PC-9 (cell line): ENCODE measurements at regions of chr16 and their contacts with region 1.

Region 1: GRCh38 chr16:53266156-53266555 is 168.1 kb upstream of the RBL2 start:
- DNase-seq: no peak
- H3K4me3 ChIP-seq: no peak overlapping the region
- H3K27ac ChIP-seq: no peak overlapping the region
- H3K4me1 ChIP-seq: no peaks in the 10 kb centered on the region
- H3K27me3 ChIP-seq: no peaks in the 10 kb centered on the region
- CTCF ChIP-seq: no peak

Region 2: GRCh38 chr16:52634104-52634503 is 632.1 kb before region 1 on chr16:
- CTCF ChIA-PET with region 1: no interaction called
- POLR2A ChIA-PET with region 1: no interaction called
- intact Hi-C with region 1: no loop called
- DNase-seq: no peak
- H3K4me3 ChIP-seq: no peak overlapping the region
- H3K27ac ChIP-seq: no peak overlapping the region
- H3K4me1 ChIP-seq: no peaks in the 10 kb centered on the region
- H3K27me3 ChIP-seq: no peaks in the 10 kb centered on the region
- CTCF ChIP-seq: no peak

Region 3: DNA sequence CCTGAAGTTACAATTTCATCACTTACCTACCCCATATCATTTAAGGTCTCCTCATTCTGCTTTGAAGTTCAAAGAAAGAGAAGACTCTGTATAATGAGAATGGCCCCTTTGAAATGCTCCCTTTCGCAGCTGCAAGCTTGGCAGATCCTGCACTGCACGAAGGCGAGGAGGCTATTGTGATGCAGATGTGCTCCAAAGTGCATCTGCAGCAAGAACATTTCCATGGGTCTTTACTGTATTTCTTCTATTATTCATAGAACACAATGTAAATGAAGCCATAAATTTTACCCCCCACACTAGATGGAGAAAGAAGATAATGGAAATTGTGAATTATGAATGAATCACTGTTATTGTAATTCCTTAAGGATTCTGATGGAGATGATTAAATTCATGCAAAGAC is 392.1 kb before region 1 on chr16:
- CTCF ChIA-PET with region 1: interaction called, 17 read pairs
- POLR2A ChIA-PET with region 1: no interaction called
- intact Hi-C with region 1: no loop called
- DNase-seq: no peak
- H3K4me3 ChIP-seq: no peak overlapping the region
- H3K27ac ChIP-seq: no peak overlapping the region
- H3K4me1 ChIP-seq: no peaks in the 10 kb centered on the region
- H3K27me3 ChIP-seq: no peaks in the 10 kb centered on the region
- CTCF ChIP-seq: no peak